CD8-positive, alpha-beta memory T cell (primary cell): ENCODE measurements at regions of chr4 and their contacts with region 1.

Region 1: DNA sequence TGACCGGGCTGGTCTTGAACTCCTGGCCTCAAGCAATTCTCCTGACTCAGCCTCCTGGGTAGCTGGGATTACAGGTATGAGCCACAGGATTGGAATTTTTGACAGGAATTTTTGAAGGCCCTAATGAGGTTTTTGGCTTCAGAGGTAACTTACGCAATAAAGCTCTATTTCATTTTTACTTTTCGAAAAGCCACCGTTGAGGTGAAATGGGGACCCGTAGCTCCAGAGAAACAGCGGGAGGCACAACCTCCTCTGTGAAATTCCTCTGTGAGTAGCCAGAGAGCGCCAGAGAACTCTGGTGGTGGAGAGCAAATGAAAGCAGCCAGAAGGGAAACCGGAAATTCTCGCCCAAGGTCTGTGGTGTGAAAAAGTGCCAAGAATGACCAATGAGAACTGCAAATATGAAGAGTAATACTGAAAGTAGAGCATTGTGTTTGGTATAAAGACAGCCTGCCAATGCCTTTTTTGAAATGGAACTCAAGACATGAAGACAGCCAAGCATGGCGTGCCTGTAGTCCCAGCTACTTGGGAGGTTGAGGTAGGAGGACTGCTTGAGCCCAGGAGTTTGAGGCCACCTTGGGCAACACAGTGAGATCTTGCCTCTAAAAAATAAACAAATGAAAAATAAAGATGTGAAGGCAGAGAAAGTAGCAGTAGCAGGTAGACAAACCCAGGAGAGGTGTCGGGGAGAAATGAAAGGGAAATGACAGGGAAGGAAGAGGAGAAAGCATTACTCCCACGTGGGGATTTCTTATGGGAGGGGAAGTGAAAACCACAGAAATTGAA is 33.0 kb upstream of the TMEM131L start:
- DNase-seq: peak; percentile 40 to 83 (median 56)
- H3K4me3 ChIP-seq: peak overlapping the region; percentile 60
- H3K4me3 Mint-ChIP-seq: peak overlapping the region; percentile 76 to 88 (median 86)
- H3K27ac ChIP-seq: no peak overlapping the region
- H3K27ac Mint-ChIP-seq: peak overlapping the region; percentile 71 to 96 (median 94)
- H3K4me1 ChIP-seq: peaks cover 59% of the 10 kb centered on the region
- H3K4me1 Mint-ChIP-seq: peaks cover 44 to 59% (median 56%) of the 10 kb centered on the region in 3 donors
- H3K27me3 ChIP-seq: no peaks in the 10 kb centered on the region
- H3K27me3 Mint-ChIP-seq: no peaks in the 10 kb centered on the region

Region 2: GRCh38 chr4:153448003-153448731 is 15.0 kb after region 1 on chr4:
- CTCF ChIA-PET with region 1: interaction called, 17 read pairs
- POLR2A ChIA-PET with region 1: interaction called, 3 read pairs
- DNase-seq: no peak
- H3K4me3 ChIP-seq: no peak overlapping the region
- H3K4me3 Mint-ChIP-seq: no peak overlapping the region
- H3K27ac ChIP-seq: no peak overlapping the region
- H3K27ac Mint-ChIP-seq: peak overlapping the region in 1 of 8 donors; percentile 26
- H3K4me1 ChIP-seq: peaks cover 18% of the 10 kb centered on the region
- H3K4me1 Mint-ChIP-seq: peaks cover 15% of the 10 kb centered on the region in 3 donors
- H3K27me3 ChIP-seq: no peaks in the 10 kb centered on the region
- H3K27me3 Mint-ChIP-seq: no peaks in the 10 kb centered on the region

Region 3: DNA sequence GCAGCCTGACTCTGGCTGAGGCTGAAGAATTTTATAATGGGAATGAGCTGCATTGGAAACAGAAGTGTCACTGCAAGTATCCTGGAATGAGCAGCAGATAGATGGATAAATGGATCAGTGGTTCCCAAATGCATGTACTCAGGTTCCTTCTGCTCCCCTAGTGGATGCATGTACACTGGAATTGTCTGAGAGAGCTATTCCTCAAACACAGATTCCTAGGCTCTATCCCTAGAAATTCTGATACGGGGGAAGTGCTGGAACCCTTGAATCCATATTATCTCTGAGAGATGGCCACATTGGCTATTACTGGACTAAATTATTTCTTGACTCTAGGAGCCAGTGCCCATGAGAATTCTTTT is 97.8 kb after region 1 on chr4:
- CTCF ChIA-PET with region 1: interaction called, 18 read pairs
- POLR2A ChIA-PET with region 1: no interaction called
- DNase-seq: no peak
- H3K4me3 ChIP-seq: peak overlapping the region; percentile 30
- H3K4me3 Mint-ChIP-seq: peak overlapping the region; percentile 60 to 86 (median 77)
- H3K27ac ChIP-seq: no peak overlapping the region
- H3K27ac Mint-ChIP-seq: peak overlapping the region; percentile 85 to 98 (median 90)
- H3K4me1 ChIP-seq: peaks cover 95% of the 10 kb centered on the region
- H3K4me1 Mint-ChIP-seq: peaks cover 89 to 97% (median 95%) of the 10 kb centered on the region in 3 donors
- H3K27me3 ChIP-seq: no peaks in the 10 kb centered on the region
- H3K27me3 Mint-ChIP-seq: peaks cover 0 to 1% of the 10 kb centered on the region in 2 donors

Region 4: GRCh38 chr4:153579872-153580271 is 146.7 kb after region 1 on chr4:
- CTCF ChIA-PET with region 1: interaction called, 133 read pairs
- POLR2A ChIA-PET with region 1: no interaction called
- DNase-seq: no peak
- H3K4me3 ChIP-seq: no peak overlapping the region
- H3K4me3 Mint-ChIP-seq: no peak overlapping the region
- H3K27ac ChIP-seq: no peak overlapping the region
- H3K27ac Mint-ChIP-seq: peak overlapping the region in 7 of 8 donors; percentile 17 to 81 (median 61)
- H3K4me1 ChIP-seq: no peaks in the 10 kb centered on the region
- H3K4me1 Mint-ChIP-seq: peaks cover 24 to 45% (median 43%) of the 10 kb centered on the region in 3 donors
- H3K27me3 ChIP-seq: no peaks in the 10 kb centered on the region
- H3K27me3 Mint-ChIP-seq: no peaks in the 10 kb centered on the region

Region 5: DNA sequence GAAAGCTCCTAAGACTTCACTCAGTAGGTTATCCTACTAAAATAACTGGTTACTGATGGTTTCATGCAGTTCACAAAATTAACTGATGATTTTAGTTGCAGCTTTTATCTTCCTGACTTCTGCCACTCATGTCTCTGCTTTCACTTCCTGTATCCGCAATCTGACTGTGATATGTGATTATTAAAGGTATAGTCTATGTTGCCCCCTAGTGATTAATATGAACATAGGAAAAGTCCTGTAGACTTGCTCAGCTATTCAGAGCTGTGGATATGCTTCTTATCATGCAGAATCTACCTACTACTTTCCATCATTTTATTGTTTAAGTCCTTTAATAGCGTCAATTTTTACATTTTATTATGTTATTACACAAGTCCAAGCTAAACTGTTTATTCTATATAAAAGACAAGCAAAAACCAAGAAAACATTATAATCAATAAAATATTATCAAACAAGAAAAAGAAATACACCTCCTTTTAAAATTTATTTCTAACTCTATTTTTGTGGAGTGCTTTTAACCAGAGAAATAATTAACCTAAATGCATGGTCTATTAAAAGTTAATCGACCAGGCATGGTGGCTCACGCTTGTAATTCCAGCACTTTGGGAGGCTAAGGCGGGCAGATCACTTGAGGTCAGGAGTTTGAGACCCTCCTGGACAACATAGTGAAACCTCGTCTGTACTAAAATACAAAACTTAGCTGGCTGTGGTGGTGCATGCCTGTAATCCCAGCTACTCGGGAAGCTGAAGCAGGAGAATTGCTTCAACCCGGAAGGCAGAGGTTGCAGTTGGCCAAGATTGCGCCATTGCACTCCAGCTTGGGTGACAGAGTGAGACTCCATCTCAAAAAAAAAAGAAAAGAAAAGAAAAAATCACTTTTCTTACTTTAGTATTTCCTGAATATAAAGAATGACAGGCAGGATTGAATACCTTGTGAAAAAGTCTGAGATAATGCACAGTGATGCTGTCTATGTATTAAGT is 210.5 kb after region 1 on chr4:
- CTCF ChIA-PET with region 1: interaction called, 15 read pairs
- POLR2A ChIA-PET with region 1: no interaction called
- DNase-seq: peak in 2 of 5 donors; percentile 44 to 60
- H3K4me3 ChIP-seq: no peak overlapping the region
- H3K4me3 Mint-ChIP-seq: peak overlapping the region in 2 of 7 donors; percentile 7 to 9
- H3K27ac ChIP-seq: no peak overlapping the region
- H3K27ac Mint-ChIP-seq: peak overlapping the region in 3 of 8 donors; percentile 5 to 41 (median 15)
- H3K4me1 ChIP-seq: peaks cover 4% of the 10 kb centered on the region
- H3K4me1 Mint-ChIP-seq: peaks cover 4 to 8% (median 6%) of the 10 kb centered on the region in 3 donors
- H3K27me3 ChIP-seq: no peaks in the 10 kb centered on the region
- H3K27me3 Mint-ChIP-seq: peaks cover 0 to 2% of the 10 kb centered on the region in 2 donors